ENCODE measurements at regions of chr6 and their contacts with region 1.

Region 1: GRCh38 chr6:127879685-127880084 is 21.2 kb downstream of the THEMIS start:
- DNase-seq: no peak
- H3K4me3 Mint-ChIP-seq: peak overlapping the region; percentile 60
- H3K27ac Mint-ChIP-seq: peak overlapping the region; percentile 56
- H3K4me1 Mint-ChIP-seq: peaks cover 65% of the 10 kb centered on the region
- H3K27me3 Mint-ChIP-seq: no peaks in the 10 kb centered on the region

Region 2: DNA sequence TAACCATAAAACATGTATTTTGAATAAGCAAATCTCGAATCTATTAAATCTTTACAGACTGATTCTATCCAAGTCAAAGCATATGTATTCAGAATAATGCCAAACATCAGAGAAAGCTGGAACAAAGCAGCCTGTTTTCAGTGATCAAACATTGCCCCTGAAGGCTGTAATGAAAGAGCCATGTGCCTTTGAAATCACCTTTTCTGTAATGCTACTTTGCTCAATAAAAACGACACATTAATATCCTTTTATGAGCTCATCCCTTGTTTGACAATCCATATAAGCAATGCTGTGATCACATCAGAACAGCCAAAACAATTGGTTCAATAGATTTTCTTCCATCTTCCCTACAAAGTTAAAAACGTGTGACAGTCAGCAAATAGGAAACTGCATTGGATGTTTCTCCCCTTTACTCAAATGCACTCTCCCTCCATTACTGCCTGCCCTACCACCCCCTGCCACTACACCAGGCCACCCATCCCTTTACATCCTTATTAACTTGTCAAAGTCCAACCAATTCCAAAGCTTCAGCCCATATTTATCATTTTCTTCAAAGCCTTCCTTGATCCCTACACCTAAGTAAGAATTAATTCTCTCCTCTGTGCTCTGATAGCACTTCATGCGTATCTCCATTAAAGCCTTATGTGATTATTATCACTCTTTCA is 20.8 kb before region 1 on chr6:
- intact Hi-C with region 1: no loop called
- DNase-seq: no peak
- H3K4me3 Mint-ChIP-seq: no peak overlapping the region
- H3K27ac Mint-ChIP-seq: peak overlapping the region; percentile 13
- H3K4me1 Mint-ChIP-seq: peaks cover 49% of the 10 kb centered on the region
- H3K27me3 Mint-ChIP-seq: no peaks in the 10 kb centered on the region

Region 3: GRCh38 chr6:127893541-127893940 is 13.9 kb after region 1 on chr6:
- intact Hi-C with region 1: loop called (anchors 1 kb)
- DNase-seq: no peak
- H3K4me3 Mint-ChIP-seq: peak overlapping the region; percentile 83
- H3K27ac Mint-ChIP-seq: peak overlapping the region; percentile 93
- H3K4me1 Mint-ChIP-seq: peaks cover 54% of the 10 kb centered on the region
- H3K27me3 Mint-ChIP-seq: no peaks in the 10 kb centered on the region

Region 4: DNA sequence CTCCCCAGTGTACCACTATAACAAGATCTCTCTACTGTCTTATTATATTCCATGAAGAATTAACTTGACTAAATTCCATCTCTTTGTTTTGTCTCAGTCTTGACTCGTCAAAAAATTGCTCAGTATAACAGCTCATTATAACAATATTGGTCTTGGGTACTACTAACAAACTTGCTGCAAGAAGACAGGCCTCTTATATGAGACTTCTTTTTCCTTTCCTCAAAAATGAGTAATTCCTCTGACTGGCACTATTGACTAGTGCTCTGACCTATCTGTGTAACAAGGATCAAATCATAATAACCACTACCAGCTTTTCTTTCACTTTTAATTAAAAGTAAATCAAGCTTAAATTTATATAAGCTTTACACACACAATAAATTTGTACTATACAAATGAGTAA is 112.5 kb after region 1 on chr6:
- intact Hi-C with region 1: no loop called
- DNase-seq: no peak
- H3K4me3 Mint-ChIP-seq: no peak overlapping the region
- H3K27ac Mint-ChIP-seq: no peak overlapping the region
- H3K4me1 Mint-ChIP-seq: peaks cover 18% of the 10 kb centered on the region
- H3K27me3 Mint-ChIP-seq: no peaks in the 10 kb centered on the region